T-cell (primary cell): ENCODE measurements at regions of chr17 and their contacts with region 1.

Region 1: DNA sequence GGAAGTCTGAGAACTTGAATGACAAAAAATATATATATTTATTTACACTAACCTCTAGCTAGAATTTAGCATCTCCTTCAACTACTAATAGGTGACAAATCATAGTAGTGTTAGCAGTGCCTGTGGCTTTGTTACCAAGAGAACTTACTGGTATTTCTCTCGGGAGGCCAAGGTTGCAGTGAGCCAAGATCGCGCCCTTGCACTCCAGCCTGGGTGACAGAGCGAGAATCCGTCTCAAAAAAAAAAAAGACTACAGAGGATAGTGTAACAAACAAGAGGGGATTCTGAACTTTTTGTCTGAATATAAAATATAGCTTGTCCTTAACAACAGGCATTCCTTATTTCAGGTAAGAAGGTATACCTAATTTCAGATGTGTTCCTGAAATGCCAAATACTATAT is 1.3 kb upstream of the SUZ12 start:
- DNase-seq: no peak
- ATAC-seq: no peak
- H3K4me3 ChIP-seq: no peak overlapping the region
- H3K4me3 Mint-ChIP-seq: peak overlapping the region; percentile 82 to 85 (median 82)
- H3K27ac ChIP-seq: no peak overlapping the region
- H3K27ac Mint-ChIP-seq: no peak overlapping the region
- H3K4me1 ChIP-seq: peaks cover 2 to 8% of the 10 kb centered on the region in 2 experiments
- H3K4me1 Mint-ChIP-seq: peaks cover 16 to 24% (median 22%) of the 10 kb centered on the region in 3 donors
- H3K27me3 ChIP-seq: no peaks in the 10 kb centered on the region
- H3K27me3 Mint-ChIP-seq: no peaks in the 10 kb centered on the region

Region 2: DNA sequence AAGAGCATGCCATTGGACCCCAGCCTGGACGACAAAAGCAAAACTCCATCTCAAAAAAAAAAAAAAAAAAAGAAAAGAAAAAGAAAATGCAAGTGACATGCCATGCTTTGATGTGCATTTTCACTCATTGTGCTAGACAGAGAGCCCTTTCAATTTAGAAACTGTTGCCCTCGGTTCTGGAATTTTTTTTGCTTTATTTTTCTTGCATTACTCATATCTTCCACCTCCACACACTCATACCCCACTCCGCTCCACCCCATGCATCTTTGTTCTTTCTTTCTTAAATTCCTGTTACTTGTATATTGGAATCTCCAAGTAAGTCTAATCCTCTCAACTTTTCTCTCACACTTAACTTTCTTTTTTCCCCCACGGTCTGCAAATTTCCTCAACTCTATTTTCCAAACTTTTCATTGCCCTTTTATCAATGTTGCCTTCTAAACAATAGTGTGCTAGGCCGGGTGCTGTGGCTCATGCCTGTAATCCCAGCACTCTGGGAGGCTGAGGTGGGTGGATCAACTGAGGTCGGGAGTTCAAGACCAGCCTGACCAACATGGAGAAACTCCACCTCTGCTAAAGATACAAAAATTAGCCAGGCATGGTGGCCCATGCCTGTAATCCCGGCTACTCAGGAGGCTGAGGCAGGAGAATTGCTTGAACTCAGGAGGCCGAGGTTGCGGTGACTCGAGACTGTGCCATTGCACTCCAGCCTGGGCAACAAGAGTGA is 15.5 kb before region 1 on chr17:
- CTCF ChIA-PET with region 1: no interaction called
- POLR2A ChIA-PET with region 1: no interaction called
- DNase-seq: no peak
- ATAC-seq: no peak
- H3K4me3 ChIP-seq: no peak overlapping the region
- H3K4me3 Mint-ChIP-seq: no peak overlapping the region
- H3K27ac ChIP-seq: no peak overlapping the region
- H3K27ac Mint-ChIP-seq: no peak overlapping the region
- H3K4me1 ChIP-seq: peaks cover 0 to 3% of the 10 kb centered on the region in 2 experiments
- H3K4me1 Mint-ChIP-seq: no peaks in the 10 kb centered on the region
- H3K27me3 ChIP-seq: peaks cover 5 to 31% of the 10 kb centered on the region in 2 experiments
- H3K27me3 Mint-ChIP-seq: peaks cover 25 to 30% of the 10 kb centered on the region in 2 donors

Region 3: GRCh38 chr17:31967648-31968047 is 32.1 kb after region 1 on chr17:
- CTCF ChIA-PET with region 1: no interaction called
- POLR2A ChIA-PET with region 1: interaction called in 1 of 2 experiments, 11 read pairs
- DNase-seq: no peak
- ATAC-seq: no peak
- H3K4me3 ChIP-seq: no peak overlapping the region
- H3K4me3 Mint-ChIP-seq: no peak overlapping the region
- H3K27ac ChIP-seq: no peak overlapping the region
- H3K27ac Mint-ChIP-seq: no peak overlapping the region
- H3K4me1 ChIP-seq: no peaks in the 10 kb centered on the region
- H3K4me1 Mint-ChIP-seq: peaks cover 0 to 2% (median 0%) of the 10 kb centered on the region in 3 donors
- H3K27me3 ChIP-seq: no peaks in the 10 kb centered on the region
- H3K27me3 Mint-ChIP-seq: no peaks in the 10 kb centered on the region

Region 4: GRCh38 chr17:32015245-32016013 is 79.9 kb after region 1 on chr17:
- CTCF ChIA-PET with region 1: no interaction called
- POLR2A ChIA-PET with region 1: no interaction called
- DNase-seq: no peak
- ATAC-seq: no peak
- H3K4me3 ChIP-seq: no peak overlapping the region
- H3K4me3 Mint-ChIP-seq: no peak overlapping the region
- H3K27ac ChIP-seq: no peak overlapping the region
- H3K27ac Mint-ChIP-seq: peak overlapping the region in 1 of 2 donors; percentile 23
- H3K4me1 ChIP-seq: peaks cover 0 to 8% of the 10 kb centered on the region in 2 experiments
- H3K4me1 Mint-ChIP-seq: peaks cover 47 to 55% (median 52%) of the 10 kb centered on the region in 3 donors
- H3K27me3 ChIP-seq: no peaks in the 10 kb centered on the region
- H3K27me3 Mint-ChIP-seq: no peaks in the 10 kb centered on the region